Cardiac septum (tissue), 1 donor: ENCODE measurements at regions of chr6 and their contacts with region 1.

Region 1: DNA sequence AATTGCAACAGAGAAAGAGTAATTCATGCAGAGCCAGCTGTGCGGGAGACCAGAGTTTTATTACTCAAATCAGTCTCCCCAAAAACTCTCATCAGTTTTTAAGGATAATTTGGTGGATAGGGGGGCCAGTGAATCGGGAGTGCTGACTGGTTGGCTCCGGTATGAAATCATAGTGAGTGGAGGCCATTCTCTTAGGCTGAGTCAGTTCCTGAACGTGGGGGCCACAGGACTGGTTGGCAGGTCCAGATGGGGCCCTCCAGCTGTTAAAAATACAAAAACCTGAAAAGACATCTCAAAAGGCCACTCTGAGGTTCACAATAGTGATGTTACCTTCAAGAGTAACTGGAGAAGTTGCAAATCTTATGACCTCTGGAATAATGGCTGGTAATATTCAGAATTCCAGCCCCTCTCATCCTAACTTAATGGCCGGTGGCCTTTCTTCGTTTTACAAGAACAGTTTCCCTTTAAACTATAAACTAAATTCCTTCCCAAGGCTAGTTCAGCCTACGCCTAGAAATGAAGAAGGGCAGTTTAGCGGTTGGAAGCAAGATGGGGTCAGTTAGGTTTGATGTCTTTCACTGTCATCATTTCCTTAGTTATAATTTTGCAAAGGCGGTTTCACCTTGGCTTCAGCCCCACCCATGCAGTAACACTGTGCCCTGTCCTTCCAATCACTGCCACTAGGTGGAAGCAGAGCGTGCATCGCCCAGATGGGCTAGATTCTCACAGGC is 6.8 kb upstream of the MICA start:
- DNase-seq: peak; percentile 92

Region 2: DNA sequence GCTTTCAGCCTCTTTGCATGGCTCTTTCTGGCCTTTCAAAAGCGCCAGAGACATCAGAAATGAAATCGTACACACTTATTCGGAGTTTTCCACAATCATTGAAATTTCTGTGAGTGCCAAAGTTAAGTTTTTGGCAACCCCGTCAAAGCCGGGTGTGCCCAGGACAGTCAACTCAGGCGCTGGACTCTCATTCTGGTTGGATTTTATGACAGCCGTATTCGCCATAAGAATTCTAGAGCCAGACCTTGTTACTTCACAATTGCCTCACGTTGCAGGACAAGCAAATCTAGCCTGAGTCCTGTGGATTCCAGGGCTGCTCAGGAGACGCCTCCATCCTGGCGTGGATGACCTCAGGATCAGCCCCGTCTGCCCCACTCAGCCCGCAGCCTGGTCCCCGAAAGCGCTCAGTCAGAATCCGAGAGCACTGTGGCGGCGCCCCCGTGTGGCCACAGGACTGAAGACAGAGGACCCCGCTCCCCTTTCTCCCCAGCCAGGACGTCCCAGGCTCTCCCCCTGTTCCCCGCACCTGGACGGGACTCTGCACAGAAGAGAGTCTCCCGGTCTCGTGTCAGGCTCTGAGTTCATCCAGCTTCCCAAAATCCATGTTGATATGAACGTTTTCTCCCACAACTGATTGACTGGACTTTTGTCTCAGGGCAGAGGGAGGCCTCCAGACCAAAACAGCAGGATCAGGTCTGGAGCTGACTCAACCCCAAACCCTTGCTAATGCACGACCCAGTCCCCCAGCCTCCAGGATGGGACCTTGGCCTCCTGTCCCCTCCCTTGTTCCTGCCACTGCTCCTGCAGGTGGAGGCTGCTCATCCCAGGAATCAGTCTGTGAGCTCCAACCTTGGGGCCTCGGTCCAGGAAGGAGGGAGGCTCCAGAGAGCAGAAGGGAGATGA is 45.0 kb after region 1 on chr6:
- intact Hi-C with region 1: loop called (anchors 2 kb)
- DNase-seq: peak; percentile 95

Region 3: GRCh38 chr6:31485055-31485454 is 88.5 kb after region 1 on chr6:
- intact Hi-C with region 1: loop called (anchors 5 kb)
- DNase-seq: no peak